ENCODE measurements at regions of chr1 and their contacts with region 1.

Region 1: DNA sequence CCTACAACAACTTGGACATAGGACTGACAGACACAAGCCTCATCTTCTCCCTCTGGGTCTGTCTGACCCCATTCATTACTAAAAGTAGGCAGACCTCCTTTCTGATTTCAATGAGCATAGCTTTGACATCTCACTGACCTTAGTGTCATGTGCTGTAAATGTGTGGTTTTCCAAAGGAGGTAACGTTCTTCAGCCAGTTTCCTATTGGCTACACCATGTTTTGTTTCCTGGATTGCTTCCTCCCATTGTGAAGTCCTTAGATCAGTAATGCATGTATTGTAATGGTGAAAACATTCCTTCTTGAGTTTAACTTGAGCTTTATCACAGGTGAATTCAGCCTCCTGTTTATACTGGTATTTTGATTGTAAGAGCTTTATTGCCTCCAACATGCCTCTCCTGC is 20.6 kb downstream of the STXBP3 start:
- DNase-seq: no peak
- H3K4me3 Mint-ChIP-seq: no peak overlapping the region
- H3K27ac Mint-ChIP-seq: no peak overlapping the region
- H3K4me1 Mint-ChIP-seq: peaks cover 2% of the 10 kb centered on the region
- H3K27me3 Mint-ChIP-seq: no peaks in the 10 kb centered on the region

Region 2: GRCh38 chr1:108785880-108786279 is 18.8 kb after region 1 on chr1:
- intact Hi-C with region 1: loop called (anchors 2 kb)
- DNase-seq: no peak
- H3K4me3 Mint-ChIP-seq: no peak overlapping the region
- H3K27ac Mint-ChIP-seq: no peak overlapping the region
- H3K4me1 Mint-ChIP-seq: no peaks in the 10 kb centered on the region
- H3K27me3 Mint-ChIP-seq: no peaks in the 10 kb centered on the region

Region 3: GRCh38 chr1:108877348-108878159 is 110.4 kb after region 1 on chr1:
- intact Hi-C with region 1: no loop called
- DNase-seq: peak; percentile 65
- H3K4me3 Mint-ChIP-seq: peak overlapping the region; percentile 93
- H3K27ac Mint-ChIP-seq: peak overlapping the region; percentile 54
- H3K4me1 Mint-ChIP-seq: peaks cover 23% of the 10 kb centered on the region
- H3K27me3 Mint-ChIP-seq: peaks cover 17% of the 10 kb centered on the region

Measured in activated CD4-positive, alpha-beta T cell treated with anti-CD3 and anti-CD28 coated beads, Interleukin-2, amount 10 ng/mL, durations not matched to agents 24 days and 14 days (primary cell).